GM12878 (cell line): ENCODE measurements at regions of chr16 and their contacts with region 1.

Region 1: DNA sequence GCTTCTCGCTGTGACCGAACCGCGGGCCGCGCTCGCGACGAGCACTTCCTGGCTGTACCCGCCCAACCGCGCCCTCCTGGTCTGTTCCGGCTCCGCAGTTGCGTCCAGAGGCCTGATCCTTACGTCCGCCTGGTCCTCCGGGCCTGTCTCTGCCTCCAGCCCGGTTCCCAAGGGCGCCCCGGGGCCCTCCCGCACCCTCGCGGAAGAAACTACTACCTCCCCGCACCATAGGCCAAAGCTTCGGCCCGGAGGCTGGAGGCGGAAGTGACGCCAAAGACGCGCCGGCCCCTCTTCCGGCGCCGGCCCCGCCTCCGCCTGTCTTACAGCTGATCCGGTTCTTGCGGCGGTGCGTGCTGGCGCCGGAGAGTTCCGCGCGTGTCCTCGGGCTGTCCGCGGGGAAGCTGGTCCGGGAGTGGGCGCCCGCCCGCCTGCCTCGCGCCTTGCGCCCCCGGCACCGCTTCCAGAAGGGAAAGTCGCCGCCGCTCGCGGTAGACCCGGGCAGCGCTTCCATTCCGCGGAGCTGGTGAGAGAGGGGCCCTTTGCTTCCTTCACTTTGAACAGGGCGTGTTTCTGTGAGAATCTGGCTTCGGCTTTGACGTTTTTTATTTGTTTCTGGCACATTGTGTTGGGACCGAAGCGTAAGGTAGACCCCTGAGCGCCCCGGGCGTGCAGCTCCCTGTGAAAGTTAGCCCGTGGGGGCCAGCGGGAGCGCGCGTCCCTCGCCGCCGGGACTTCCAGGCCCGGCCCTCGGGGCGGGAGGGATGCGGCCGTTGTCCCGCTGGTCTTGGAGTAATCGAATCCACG is at the start of gene ZNF778:
- DNase-seq: peak; percentile 40
- ATAC-seq: peak; percentile 95
- H3K4me3 ChIP-seq: peak within 1 kb of the TSS; percentile 92
- H3K27ac ChIP-seq: peak within 1 kb of the TSS; percentile 86
- H3K4me1 ChIP-seq: peaks cover 3% of the 10 kb centered on the region
- H3K27me3 ChIP-seq: no peaks in the 10 kb centered on the region
- CTCF ChIP-seq: no peak
- EP300 ChIP-seq: no peak
- POLR2A ChIP-seq: peak; percentile 92
- RAD21 ChIP-seq: no peak
- polyA plus RNA-seq, gene ZNF778: 0.20 to 0.40 TPM

Region 2: GRCh38 chr16:88743693-88744576 is 473.7 kb before region 1 on chr16:
- CTCF ChIA-PET with region 1: interaction called, 5 read pairs
- POLR2A ChIA-PET with region 1: no interaction called
- RAD21 ChIA-PET with region 1: no interaction called
- SMC1A ChIA-PET with region 1: no interaction called
- in situ Hi-C with region 1: loop called (anchors 5 kb)
- intact Hi-C with region 1: loop called (anchors 10 kb)
- DNase-seq: no peak
- ATAC-seq: peak; percentile 56
- H3K4me3 ChIP-seq: no peak overlapping the region
- H3K27ac ChIP-seq: no peak overlapping the region
- H3K4me1 ChIP-seq: peaks cover 11% of the 10 kb centered on the region
- H3K27me3 ChIP-seq: no peaks in the 10 kb centered on the region
- CTCF ChIP-seq: peak; percentile 72 to 85 (median 80)
- EP300 ChIP-seq: no peak
- POLR2A ChIP-seq: no peak
- RAD21 ChIP-seq: peak; percentile 49

Region 3: GRCh38 chr16:88811769-88812512 is 405.6 kb before region 1 on chr16 and contains the start of gene APRT:
- CTCF ChIA-PET with region 1: interaction called, 7 read pairs
- POLR2A ChIA-PET with region 1: no interaction called
- RAD21 ChIA-PET with region 1: interaction called, 7 read pairs
- SMC1A ChIA-PET with region 1: interaction called, 3 read pairs
- in situ Hi-C with region 1: no loop called
- intact Hi-C with region 1: loop called (anchors 1 kb)
- DNase-seq: peak; percentile 83
- ATAC-seq: peak; percentile 83
- H3K4me3 ChIP-seq: peak within 1 kb of the TSS; percentile 85
- H3K27ac ChIP-seq: peak within 1 kb of the TSS; percentile 95
- H3K4me1 ChIP-seq: peaks cover 20% of the 10 kb centered on the region
- H3K27me3 ChIP-seq: no peaks in the 10 kb centered on the region
- CTCF ChIP-seq: peak in 2 of 3 experiments; percentile 39 to 56; a peak in 3 of 6 replicates
- EP300 ChIP-seq: no peak
- POLR2A ChIP-seq: peak; percentile 91
- RAD21 ChIP-seq: 0 out of 2 replicates have a peak, but pooled peaks have one; percentile 30
- polyA plus RNA-seq, gene APRT: 30.6 to 100 TPM

Region 4: GRCh38 chr16:89122322-89122851 is 95.2 kb before region 1 on chr16:
- CTCF ChIA-PET with region 1: no interaction called
- POLR2A ChIA-PET with region 1: no interaction called
- RAD21 ChIA-PET with region 1: no interaction called
- SMC1A ChIA-PET with region 1: no interaction called
- in situ Hi-C with region 1: no loop called
- intact Hi-C with region 1: no loop called
- DNase-seq: no peak
- ATAC-seq: peak; percentile 55
- H3K4me3 ChIP-seq: no peak overlapping the region
- H3K27ac ChIP-seq: no peak overlapping the region
- H3K4me1 ChIP-seq: peaks cover 3% of the 10 kb centered on the region; the same call in 1 of the 2 replicates
- H3K27me3 ChIP-seq: no peaks in the 10 kb centered on the region
- CTCF ChIP-seq: no peak
- EP300 ChIP-seq: no peak
- POLR2A ChIP-seq: peak; percentile 14; the same call in 1 of the 2 replicates
- RAD21 ChIP-seq: no peak

Region 5: GRCh38 chr16:89241187-89242007 is 23.8 kb after region 1 on chr16:
- CTCF ChIA-PET with region 1: interaction called, 11 read pairs
- POLR2A ChIA-PET with region 1: no interaction called
- RAD21 ChIA-PET with region 1: no interaction called
- SMC1A ChIA-PET with region 1: no interaction called
- in situ Hi-C with region 1: no loop called
- intact Hi-C with region 1: no loop called
- DNase-seq: peak; percentile 57
- ATAC-seq: peak; percentile 86
- H3K4me3 ChIP-seq: peak overlapping the region; percentile 72
- H3K27ac ChIP-seq: peak overlapping the region; percentile 96
- H3K4me1 ChIP-seq: no peaks in the 10 kb centered on the region; the same call in 1 of the 2 replicates
- H3K27me3 ChIP-seq: no peaks in the 10 kb centered on the region
- CTCF ChIP-seq: no peak
- EP300 ChIP-seq: no peak
- POLR2A ChIP-seq: peak; percentile 94
- RAD21 ChIP-seq: no peak

Region 6: DNA sequence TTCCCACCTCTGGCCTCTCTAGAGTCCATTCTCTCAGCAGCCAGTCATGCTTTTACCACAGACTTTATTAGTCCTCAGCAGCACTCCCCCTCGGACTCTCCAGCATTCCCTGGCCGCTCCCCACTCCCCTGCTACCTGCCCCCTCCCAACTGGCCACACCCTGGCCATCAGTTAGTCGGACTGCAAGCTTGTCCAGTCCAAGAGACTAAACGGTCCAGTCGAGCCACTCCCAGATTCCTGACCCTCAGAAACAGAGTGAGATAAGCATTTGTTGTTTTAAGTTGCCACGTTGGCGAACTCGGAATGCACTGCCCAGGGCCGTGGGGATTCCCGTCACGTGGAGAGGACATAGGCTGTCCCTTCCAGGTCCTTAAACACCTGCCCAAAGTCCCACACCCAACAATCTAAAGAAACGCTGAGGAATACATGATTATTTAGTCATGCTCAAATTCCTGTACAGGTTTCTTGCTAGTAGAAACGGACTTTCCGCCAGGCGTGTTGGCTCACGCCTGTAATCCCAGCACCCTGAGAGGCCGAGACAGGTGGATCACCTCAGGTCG is 284.8 kb after region 1 on chr16:
- CTCF ChIA-PET with region 1: no interaction called
- POLR2A ChIA-PET with region 1: interaction called, 11 read pairs
- RAD21 ChIA-PET with region 1: no interaction called
- SMC1A ChIA-PET with region 1: no interaction called
- in situ Hi-C with region 1: no loop called
- intact Hi-C with region 1: no loop called
- DNase-seq: no peak
- ATAC-seq: no peak
- H3K4me3 ChIP-seq: no peak overlapping the region
- H3K27ac ChIP-seq: no peak overlapping the region
- H3K4me1 ChIP-seq: peaks cover 21% of the 10 kb centered on the region
- H3K27me3 ChIP-seq: no peaks in the 10 kb centered on the region
- CTCF ChIP-seq: no peak
- EP300 ChIP-seq: no peak
- POLR2A ChIP-seq: no peak
- RAD21 ChIP-seq: no peak